A549 (cell line): ENCODE measurements at regions of chr1 and their contacts with region 1.

Region 1: DNA sequence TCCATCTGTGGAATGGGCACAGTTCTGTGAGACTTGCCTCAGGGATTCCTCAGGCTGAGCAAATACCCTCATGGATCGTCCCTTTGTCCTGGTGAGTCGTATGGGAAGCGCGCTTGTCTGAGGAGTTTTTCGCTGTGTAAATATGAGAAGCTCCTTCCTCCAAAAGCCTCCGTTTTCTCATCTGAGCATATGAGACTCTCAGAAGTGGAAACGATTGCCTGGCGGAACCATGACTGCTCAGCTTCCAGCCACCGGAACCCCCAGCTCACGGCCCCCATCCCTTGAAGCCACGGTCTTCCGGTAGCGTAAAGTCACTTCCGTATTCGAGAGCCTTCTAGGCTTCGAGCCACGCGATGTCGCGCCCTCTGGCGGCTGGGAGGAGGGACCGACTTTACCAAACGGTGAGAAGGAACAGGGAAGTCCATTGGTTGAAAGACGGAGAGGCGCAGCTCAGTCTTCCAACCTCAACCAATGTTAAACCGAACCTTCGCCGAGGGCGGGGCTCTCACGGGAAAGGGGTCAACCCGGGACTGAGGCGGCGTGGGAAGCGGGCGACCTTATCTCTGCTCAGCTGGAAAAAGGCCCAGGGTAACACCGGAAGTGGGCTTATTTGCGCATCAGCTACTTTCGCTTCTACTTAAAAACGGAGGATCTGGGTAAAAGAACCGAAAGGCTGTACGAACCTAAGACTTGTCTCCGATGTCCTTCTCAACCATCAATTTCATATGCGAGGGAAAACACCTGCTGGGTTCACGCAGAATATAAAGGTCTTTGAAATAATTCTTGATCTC is 46.2 kb downstream of the AZIN2 start:
- DNase-seq: peak; percentile 94 to 99
- ATAC-seq: peak; percentile 99
- H3K4me3 ChIP-seq: peak overlapping the region; percentile 63
- H3K27ac ChIP-seq: peak overlapping the region; percentile 85 to 89
- H3K4me1 ChIP-seq: peaks cover 4% of the 10 kb centered on the region; the same call in 1 of the 3 replicates
- CTCF ChIP-seq: peak; percentile 70
- EP300 ChIP-seq: no peak
- POLR2A ChIP-seq: peak; percentile 66
- RAD21 ChIP-seq: no peak

Region 2: GRCh38 chr1:33055210-33056008 is 71.8 kb before region 1 on chr1:
- CTCF ChIA-PET with region 1: no interaction called
- POLR2A ChIA-PET with region 1: no interaction called
- DNase-seq: peak; percentile 64 to 92
- ATAC-seq: peak; percentile 92 to 97
- H3K4me3 ChIP-seq: no peak overlapping the region
- H3K27ac ChIP-seq: peak overlapping the region; percentile 71 to 78
- H3K4me1 ChIP-seq: peaks cover 13% of the 10 kb centered on the region
- CTCF ChIP-seq: peak; percentile 55
- EP300 ChIP-seq: no peak
- POLR2A ChIP-seq: no peak
- RAD21 ChIP-seq: peak; percentile 57 to 65

Region 3: GRCh38 chr1:33111970-33112369 is 15.2 kb before region 1 on chr1:
- CTCF ChIA-PET with region 1: interaction called, 14 read pairs
- POLR2A ChIA-PET with region 1: no interaction called
- DNase-seq: peak in 1 of 2 experiments; percentile 32
- ATAC-seq: peak in 1 of 2 experiments; percentile 49; a peak in 1 of 6 replicates
- H3K4me3 ChIP-seq: no peak overlapping the region
- H3K27ac ChIP-seq: no peak overlapping the region
- H3K4me1 ChIP-seq: no peaks in the 10 kb centered on the region
- CTCF ChIP-seq: peak; percentile 21; the same call in 1 of the 3 replicates
- EP300 ChIP-seq: no peak
- POLR2A ChIP-seq: no peak
- RAD21 ChIP-seq: peak; percentile 19 to 35; a peak in 2 of 5 replicates

Region 4: GRCh38 chr1:33137800-33138199 is 10.6 kb after region 1 on chr1:
- CTCF ChIA-PET with region 1: interaction called, 18 read pairs
- POLR2A ChIA-PET with region 1: no interaction called
- DNase-seq: no peak
- ATAC-seq: peak in 1 of 2 experiments; percentile 76; a peak in 3 of 6 replicates
- H3K4me3 ChIP-seq: no peak overlapping the region
- H3K27ac ChIP-seq: no peak overlapping the region
- H3K4me1 ChIP-seq: no peaks in the 10 kb centered on the region
- CTCF ChIP-seq: no peak
- EP300 ChIP-seq: no peak
- POLR2A ChIP-seq: no peak
- RAD21 ChIP-seq: peak in 1 of 2 experiments; percentile 25; a peak in 1 of 5 replicates

Region 5: GRCh38 chr1:33188572-33189275 is 61.5 kb after region 1 on chr1:
- CTCF ChIA-PET with region 1: no interaction called
- POLR2A ChIA-PET with region 1: no interaction called
- DNase-seq: no peak
- ATAC-seq: no peak
- H3K4me3 ChIP-seq: no peak overlapping the region
- H3K27ac ChIP-seq: no peak overlapping the region
- H3K4me1 ChIP-seq: no peaks in the 10 kb centered on the region
- CTCF ChIP-seq: no peak
- EP300 ChIP-seq: no peak
- POLR2A ChIP-seq: no peak
- RAD21 ChIP-seq: no peak

Region 6: DNA sequence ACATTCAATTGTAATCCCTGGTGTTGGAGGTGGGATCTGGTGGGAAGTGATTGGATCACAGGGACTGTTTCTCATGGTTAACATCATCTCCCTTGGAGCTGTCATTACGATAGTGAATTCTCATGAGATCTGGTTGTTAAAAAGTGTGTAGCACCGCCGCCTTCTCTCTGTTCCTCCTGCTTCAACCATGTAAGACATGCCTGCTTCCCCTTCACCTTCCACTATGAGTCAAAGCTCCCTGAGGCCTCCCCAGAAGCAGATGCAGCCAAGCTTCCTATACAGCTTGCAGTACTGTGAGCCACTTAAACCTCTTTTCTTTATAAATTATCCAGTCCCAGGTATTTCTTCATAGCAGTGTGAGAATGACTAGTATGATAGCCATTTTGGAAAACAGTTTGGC is 84.8 kb after region 1 on chr1:
- CTCF ChIA-PET with region 1: no interaction called
- POLR2A ChIA-PET with region 1: no interaction called
- DNase-seq: no peak
- ATAC-seq: no peak
- H3K4me3 ChIP-seq: no peak overlapping the region
- H3K27ac ChIP-seq: no peak overlapping the region
- H3K4me1 ChIP-seq: no peaks in the 10 kb centered on the region
- CTCF ChIP-seq: no peak
- EP300 ChIP-seq: no peak
- POLR2A ChIP-seq: no peak
- RAD21 ChIP-seq: no peak

Region 7: GRCh38 chr1:33414879-33415278 is 287.7 kb after region 1 on chr1:
- CTCF ChIA-PET with region 1: no interaction called
- POLR2A ChIA-PET with region 1: no interaction called
- DNase-seq: no peak
- ATAC-seq: no peak
- H3K4me3 ChIP-seq: no peak overlapping the region
- H3K27ac ChIP-seq: no peak overlapping the region
- H3K4me1 ChIP-seq: no peaks in the 10 kb centered on the region
- CTCF ChIP-seq: no peak
- EP300 ChIP-seq: no peak
- POLR2A ChIP-seq: no peak
- RAD21 ChIP-seq: no peak